MCF 10A (cell line): ENCODE measurements at regions of chr7 and their contacts with region 1.

Region 1: GRCh38 chr7:129054438-129055293 is at the start of gene TNPO3:
- DNase-seq: peak; percentile 94
- H3K4me3 Mint-ChIP-seq: peak within 1 kb of the TSS; percentile 97
- H3K27ac Mint-ChIP-seq: peak within 1 kb of the TSS; percentile 100
- H3K4me1 Mint-ChIP-seq: peaks cover 2% of the 10 kb centered on the region
- H3K27me3 Mint-ChIP-seq: peaks cover 13% of the 10 kb centered on the region
- CTCF ChIP-seq: no peak
- total RNA-seq, gene TNPO3: 42.3 and 44.2 TPM in 2 replicates

Region 2: DNA sequence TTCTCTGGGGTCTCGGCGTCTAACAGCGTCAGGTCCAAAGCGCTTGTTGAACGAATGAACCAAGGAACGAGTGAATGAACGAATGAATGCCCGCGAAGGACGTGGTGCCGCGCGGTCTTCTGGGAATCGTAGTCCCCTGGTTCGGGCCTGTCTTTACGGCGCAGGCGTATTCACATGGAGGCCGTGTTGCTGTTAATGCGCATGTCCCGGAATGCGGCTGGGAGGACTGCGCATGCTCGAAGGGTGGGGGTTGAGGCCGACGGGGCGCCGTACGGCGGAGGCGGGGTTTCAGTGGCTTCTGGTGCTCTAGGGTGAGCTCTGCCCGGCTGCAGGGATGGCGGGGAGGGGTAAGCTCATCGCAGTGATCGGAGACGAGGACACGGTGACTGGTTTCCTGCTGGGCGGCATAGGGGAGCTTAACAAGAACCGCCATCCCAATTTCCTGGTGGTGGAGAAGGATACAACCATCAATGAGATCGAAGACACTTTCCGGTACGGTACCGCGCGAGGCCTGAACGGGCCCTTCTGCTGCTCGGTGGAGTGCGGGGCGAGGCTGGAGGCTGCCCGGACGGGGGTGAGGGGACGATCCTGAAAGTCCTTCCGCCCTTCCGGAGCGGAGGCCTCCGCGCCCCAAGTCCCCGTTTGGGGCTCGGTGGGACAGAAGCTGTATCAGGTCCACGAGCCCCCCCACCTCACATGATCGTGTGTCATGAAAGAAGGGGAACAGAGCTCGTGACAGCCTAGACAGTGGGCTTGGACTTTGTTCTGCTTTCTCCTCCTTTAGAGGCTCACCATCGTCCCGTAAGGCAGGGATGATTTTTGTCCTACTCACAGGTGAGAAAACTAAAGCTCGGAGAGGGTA is 191.9 kb before region 1 on chr7 and contains the start of gene ATP6V1F:
- CTCF ChIA-PET with region 1: no interaction called
- POLR2A ChIA-PET with region 1: interaction called, 14 read pairs
- intact Hi-C with region 1: no loop called
- DNase-seq: peak; percentile 98
- H3K4me3 Mint-ChIP-seq: peak within 1 kb of the TSS; percentile 82
- H3K27ac Mint-ChIP-seq: peak within 1 kb of the TSS; percentile 84
- H3K4me1 Mint-ChIP-seq: peaks cover 14% of the 10 kb centered on the region
- H3K27me3 Mint-ChIP-seq: no peaks in the 10 kb centered on the region
- CTCF ChIP-seq: no peak
- total RNA-seq, gene ATP6V1F: 125 and 152 TPM in 2 replicates

Region 3: DNA sequence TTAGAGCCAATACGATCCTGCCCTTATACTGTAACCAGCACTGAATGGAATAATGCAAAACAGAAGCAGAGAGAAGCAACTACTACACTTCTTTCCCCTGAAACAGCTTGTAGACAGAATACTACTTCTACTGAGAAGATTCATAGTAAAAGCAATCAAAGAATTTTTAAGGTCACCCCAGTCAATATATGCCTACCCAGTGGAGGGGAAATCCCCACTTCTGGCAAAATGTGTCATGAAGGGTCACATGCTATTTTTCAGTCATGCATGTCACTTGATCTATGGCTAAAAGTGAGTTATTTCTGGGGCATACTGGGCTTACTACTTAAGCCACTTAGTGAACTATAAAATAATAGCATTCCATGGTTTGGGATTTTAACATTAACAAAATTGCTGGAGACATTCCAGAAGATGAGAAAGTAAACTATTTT is 91.3 kb before region 1 on chr7:
- CTCF ChIA-PET with region 1: interaction called, 3 read pairs
- POLR2A ChIA-PET with region 1: interaction called, 13 read pairs
- intact Hi-C with region 1: no loop called
- DNase-seq: no peak
- H3K4me3 Mint-ChIP-seq: no peak overlapping the region
- H3K27ac Mint-ChIP-seq: peak overlapping the region; percentile 74
- H3K4me1 Mint-ChIP-seq: peaks cover 24% of the 10 kb centered on the region
- H3K27me3 Mint-ChIP-seq: no peaks in the 10 kb centered on the region
- CTCF ChIP-seq: no peak

Region 4: DNA sequence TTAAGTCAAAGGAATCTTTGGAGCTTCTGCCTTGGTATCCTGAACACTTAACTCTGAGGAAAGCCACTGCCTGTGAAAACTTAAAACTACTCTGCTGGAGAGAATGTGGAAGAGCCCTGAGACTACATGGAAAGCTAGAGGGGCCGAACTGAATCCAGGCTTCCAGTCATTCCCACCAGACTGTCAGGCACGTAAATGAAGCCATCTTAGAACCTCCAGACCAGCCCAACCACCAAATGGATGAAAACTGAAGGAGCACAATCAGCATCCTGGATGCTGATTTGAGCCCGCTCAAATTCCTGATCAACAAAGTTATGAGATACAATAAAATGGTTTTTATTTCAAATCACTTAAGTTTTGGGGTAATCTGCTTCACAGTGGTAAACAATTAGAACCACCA is 30.5 kb before region 1 on chr7:
- CTCF ChIA-PET with region 1: interaction called, 3 read pairs
- POLR2A ChIA-PET with region 1: interaction called, 10 read pairs
- intact Hi-C with region 1: no loop called
- DNase-seq: no peak
- H3K4me3 Mint-ChIP-seq: no peak overlapping the region
- H3K27ac Mint-ChIP-seq: no peak overlapping the region
- H3K4me1 Mint-ChIP-seq: peaks cover 12% of the 10 kb centered on the region
- H3K27me3 Mint-ChIP-seq: no peaks in the 10 kb centered on the region
- CTCF ChIP-seq: no peak

Region 5: GRCh38 chr7:129041142-129042085 is 13.3 kb before region 1 on chr7:
- CTCF ChIA-PET with region 1: no interaction called
- POLR2A ChIA-PET with region 1: interaction called, 11 read pairs
- intact Hi-C with region 1: no loop called
- DNase-seq: no peak
- H3K4me3 Mint-ChIP-seq: no peak overlapping the region
- H3K27ac Mint-ChIP-seq: no peak overlapping the region
- H3K4me1 Mint-ChIP-seq: peaks cover 19% of the 10 kb centered on the region
- H3K27me3 Mint-ChIP-seq: no peaks in the 10 kb centered on the region
- CTCF ChIP-seq: no peak

Region 6: DNA sequence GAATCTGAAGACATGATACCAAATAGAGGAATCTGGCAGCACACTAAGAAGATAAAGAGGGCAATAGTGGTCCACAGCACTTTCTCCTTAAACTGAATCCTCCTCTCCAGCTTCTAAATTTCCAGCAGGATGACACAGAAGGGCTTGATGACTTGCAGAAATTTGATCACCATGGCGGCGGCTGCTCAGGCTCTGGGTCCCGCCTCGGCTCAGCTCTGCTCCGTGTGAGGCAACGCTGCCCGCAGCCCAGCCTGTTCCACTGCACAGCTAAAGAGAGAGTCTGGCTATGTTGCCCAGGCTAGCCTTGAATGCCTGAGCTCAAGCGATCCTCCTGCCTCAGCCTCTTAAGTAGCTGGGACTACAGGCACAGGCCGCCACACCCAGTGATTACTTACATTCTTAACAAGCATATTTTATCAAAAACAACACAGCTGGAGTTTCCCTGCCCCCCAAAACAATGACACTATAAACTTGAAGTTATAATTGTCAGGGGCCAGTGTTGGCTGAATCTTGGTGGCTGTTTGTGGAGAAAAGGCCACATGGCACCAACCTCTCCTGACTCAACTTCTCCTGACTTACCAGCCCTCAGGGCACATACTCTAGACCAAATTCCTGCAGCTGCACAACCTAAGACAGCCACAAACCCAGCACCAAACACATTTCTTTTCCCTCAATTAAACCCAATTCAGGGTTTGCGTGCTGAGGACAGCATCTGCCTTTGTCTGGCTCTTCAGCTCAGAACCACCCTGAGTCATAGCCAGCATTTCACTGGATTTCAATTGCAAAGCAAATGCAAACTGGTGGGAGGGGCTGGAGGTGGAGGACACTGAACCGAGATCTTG is 11.8 kb after region 1 on chr7:
- CTCF ChIA-PET with region 1: interaction called, 9 read pairs
- POLR2A ChIA-PET with region 1: interaction called, 33 read pairs
- intact Hi-C with region 1: no loop called
- DNase-seq: peak; percentile 33
- H3K4me3 Mint-ChIP-seq: no peak overlapping the region
- H3K27ac Mint-ChIP-seq: peak overlapping the region; percentile 20
- H3K4me1 Mint-ChIP-seq: peaks cover 9% of the 10 kb centered on the region
- H3K27me3 Mint-ChIP-seq: peaks cover 18% of the 10 kb centered on the region
- CTCF ChIP-seq: no peak

Region 7: DNA sequence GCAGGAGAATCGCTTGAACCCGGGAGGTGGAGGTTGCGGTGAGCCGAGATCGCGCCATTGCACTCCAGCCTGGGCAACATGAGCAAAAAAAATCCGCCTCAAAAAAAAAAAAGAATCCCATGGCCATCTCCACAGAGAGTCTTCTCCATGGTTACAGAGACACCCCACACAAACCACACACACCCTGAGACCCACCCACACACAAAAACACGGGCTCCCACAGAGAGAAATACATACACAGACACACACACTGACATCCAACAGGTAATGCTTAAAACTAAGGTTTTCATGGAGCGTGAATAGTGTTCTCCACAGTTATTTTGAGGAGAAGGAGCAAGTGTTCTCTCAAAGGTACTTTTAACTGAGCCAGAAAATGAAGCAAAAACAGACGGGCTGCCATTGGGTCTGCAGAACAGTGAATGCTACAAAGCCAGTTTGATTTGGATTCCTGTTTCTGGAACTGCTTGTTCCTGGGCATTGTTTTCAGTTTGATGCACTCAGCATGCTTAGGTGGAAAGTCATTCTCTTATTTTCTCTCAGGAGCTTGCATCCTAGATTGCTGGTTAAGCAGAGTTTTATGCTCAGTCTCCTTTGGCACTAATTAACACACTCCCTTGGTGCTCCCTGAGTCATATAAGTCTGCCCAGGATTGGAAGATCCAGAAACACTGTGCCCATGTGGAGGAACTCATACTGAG is 185.6 kb after region 1 on chr7:
- CTCF ChIA-PET with region 1: no interaction called
- POLR2A ChIA-PET with region 1: no interaction called
- intact Hi-C with region 1: no loop called
- DNase-seq: no peak
- H3K4me3 Mint-ChIP-seq: no peak overlapping the region
- H3K27ac Mint-ChIP-seq: no peak overlapping the region
- H3K4me1 Mint-ChIP-seq: no peaks in the 10 kb centered on the region
- H3K27me3 Mint-ChIP-seq: no peaks in the 10 kb centered on the region
- CTCF ChIP-seq: no peak

Region 8: DNA sequence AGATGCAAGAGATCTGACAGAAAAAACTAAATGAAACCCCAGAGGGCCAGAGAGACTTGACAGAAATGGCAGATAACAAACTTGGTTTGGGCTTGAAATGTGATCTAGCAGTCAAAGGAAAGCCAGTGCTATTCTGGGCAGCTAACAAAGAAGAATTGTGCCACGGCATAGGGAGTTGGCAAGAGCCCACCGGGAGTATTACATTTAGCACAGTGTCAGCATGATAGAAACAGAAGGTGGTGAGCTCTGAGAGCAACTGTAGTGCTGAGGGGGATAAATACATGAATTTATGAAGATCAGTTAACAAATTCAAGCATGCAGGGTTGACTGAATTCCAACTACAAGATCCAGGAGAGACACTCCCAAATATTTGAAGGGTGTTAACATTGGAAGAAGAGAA is 261.3 kb after region 1 on chr7:
- CTCF ChIA-PET with region 1: no interaction called
- POLR2A ChIA-PET with region 1: no interaction called
- intact Hi-C with region 1: no loop called
- DNase-seq: no peak
- H3K4me3 Mint-ChIP-seq: no peak overlapping the region
- H3K27ac Mint-ChIP-seq: peak overlapping the region; percentile 36
- H3K4me1 Mint-ChIP-seq: peaks cover 5% of the 10 kb centered on the region
- H3K27me3 Mint-ChIP-seq: no peaks in the 10 kb centered on the region
- CTCF ChIP-seq: no peak